Activated naive CD4-positive, alpha-beta T cell treated with anti-CD3 and anti-CD28 coated beads, Interleukin-2, amount 10 ng/mL, durations not matched to agents 7 days and 5 days (primary cell): ENCODE measurements at regions of chrX and their contacts with region 1.

Region 1: GRCh38 chrX:136028251-136028984 is 43.2 kb downstream of the SLC9A6 start:
- DNase-seq: no peak
- H3K4me3 Mint-ChIP-seq: no peak overlapping the region
- H3K27ac Mint-ChIP-seq: no peak overlapping the region
- H3K4me1 Mint-ChIP-seq: no peaks in the 10 kb centered on the region
- H3K27me3 Mint-ChIP-seq: no peaks in the 10 kb centered on the region

Region 2: GRCh38 chrX:135985141-135985972 is 43.1 kb before region 1 on chrX and contains the start of gene SLC9A6:
- CTCF ChIA-PET with region 1: no interaction called
- DNase-seq: peak; percentile 76
- H3K4me3 Mint-ChIP-seq: peak within 1 kb of the TSS; percentile 93
- H3K27ac Mint-ChIP-seq: peak within 1 kb of the TSS; percentile 88
- H3K4me1 Mint-ChIP-seq: peaks cover 59% of the 10 kb centered on the region
- H3K27me3 Mint-ChIP-seq: no peaks in the 10 kb centered on the region

Region 3: DNA sequence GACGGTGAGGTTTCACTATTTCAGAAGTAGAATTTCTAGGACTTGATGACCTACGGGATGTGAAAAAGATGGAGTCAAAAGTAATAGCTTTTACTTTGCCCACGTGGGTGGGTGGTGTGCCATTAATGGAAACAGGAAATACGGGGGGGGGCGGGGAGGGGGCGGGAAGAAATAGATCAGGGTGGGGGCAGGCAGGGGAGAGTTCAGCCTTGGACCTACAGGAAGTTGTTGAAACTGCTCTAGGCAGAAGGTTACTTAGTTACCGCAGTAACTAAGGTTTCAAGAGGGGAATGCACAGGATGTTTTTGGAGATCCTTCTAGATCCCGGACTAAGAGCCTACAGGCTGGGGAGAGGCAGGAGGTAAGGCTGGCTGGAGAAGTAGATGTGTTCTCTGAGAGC is 115.3 kb after region 1 on chrX:
- CTCF ChIA-PET with region 1: no interaction called
- DNase-seq: peak; percentile 22
- H3K4me3 Mint-ChIP-seq: peak overlapping the region; percentile 45
- H3K27ac Mint-ChIP-seq: peak overlapping the region; percentile 58
- H3K4me1 Mint-ChIP-seq: peaks cover 37% of the 10 kb centered on the region
- H3K27me3 Mint-ChIP-seq: peaks cover 22% of the 10 kb centered on the region

Region 4: DNA sequence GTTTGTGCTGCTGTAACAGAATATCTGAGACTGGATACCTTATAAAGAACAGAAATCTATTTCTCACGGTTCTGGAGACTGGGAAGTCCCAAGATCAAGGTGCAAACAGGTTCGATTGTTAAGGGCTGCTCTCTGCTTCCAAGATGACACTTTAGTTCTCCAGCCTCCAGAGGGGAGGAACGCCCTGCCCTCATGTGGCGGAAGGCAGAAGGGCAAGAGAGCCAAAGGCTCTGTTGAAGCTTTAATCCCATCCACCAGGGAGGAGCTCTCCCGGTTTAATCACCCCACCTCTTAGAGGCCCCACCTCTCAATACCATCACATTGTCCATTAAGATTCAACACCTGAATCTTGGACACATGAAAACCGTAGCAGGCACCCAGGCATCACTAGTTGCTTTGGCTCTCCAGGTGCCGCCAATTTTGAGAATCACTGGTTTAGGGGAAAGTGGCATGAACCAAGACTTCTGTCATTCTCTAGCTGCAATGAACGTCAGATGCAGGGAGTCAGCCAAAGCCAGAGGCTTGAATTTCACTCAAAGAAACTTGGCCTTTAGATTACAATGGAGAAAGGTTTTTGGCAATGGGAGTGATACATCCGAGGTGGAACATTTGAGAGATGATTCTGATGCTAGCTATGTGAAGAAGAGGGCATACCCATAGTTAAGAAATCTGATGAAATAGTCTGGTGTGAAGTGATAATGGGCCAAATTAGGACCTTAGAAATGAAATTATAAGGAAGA is 134.6 kb after region 1 on chrX:
- CTCF ChIA-PET with region 1: interaction called, 96 read pairs
- DNase-seq: peak; percentile 62
- H3K4me3 Mint-ChIP-seq: no peak overlapping the region
- H3K27ac Mint-ChIP-seq: no peak overlapping the region
- H3K4me1 Mint-ChIP-seq: peaks cover 8% of the 10 kb centered on the region
- H3K27me3 Mint-ChIP-seq: no peaks in the 10 kb centered on the region

Region 5: GRCh38 chrX:136196691-136197155 is 168.3 kb after region 1 on chrX:
- CTCF ChIA-PET with region 1: interaction called, 16 read pairs
- DNase-seq: no peak
- H3K4me3 Mint-ChIP-seq: no peak overlapping the region
- H3K27ac Mint-ChIP-seq: no peak overlapping the region
- H3K4me1 Mint-ChIP-seq: peaks cover 41% of the 10 kb centered on the region
- H3K27me3 Mint-ChIP-seq: no peaks in the 10 kb centered on the region

Region 6: DNA sequence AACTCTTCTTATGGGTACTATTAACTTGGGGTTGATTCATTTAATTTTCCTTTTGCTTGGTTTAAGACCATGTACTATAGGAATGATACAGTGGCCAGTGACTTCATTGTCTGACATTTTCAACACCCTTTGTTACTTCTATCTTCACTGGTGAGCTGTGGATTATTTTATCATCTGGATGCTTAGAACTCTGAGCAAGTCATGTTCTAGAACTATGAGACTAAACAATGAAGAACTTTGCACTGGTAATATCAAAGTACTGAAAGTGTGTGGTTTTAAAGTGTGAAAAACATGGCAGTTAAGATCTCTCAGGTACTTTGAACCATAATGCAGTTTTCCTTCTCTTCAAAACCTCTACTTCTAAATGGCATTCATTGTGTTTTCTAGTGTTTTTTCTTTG is 175.0 kb after region 1 on chrX:
- CTCF ChIA-PET with region 1: interaction called, 16 read pairs
- DNase-seq: no peak
- H3K4me3 Mint-ChIP-seq: no peak overlapping the region
- H3K27ac Mint-ChIP-seq: peak overlapping the region; percentile 77
- H3K4me1 Mint-ChIP-seq: peaks cover 35% of the 10 kb centered on the region
- H3K27me3 Mint-ChIP-seq: no peaks in the 10 kb centered on the region

Region 7: DNA sequence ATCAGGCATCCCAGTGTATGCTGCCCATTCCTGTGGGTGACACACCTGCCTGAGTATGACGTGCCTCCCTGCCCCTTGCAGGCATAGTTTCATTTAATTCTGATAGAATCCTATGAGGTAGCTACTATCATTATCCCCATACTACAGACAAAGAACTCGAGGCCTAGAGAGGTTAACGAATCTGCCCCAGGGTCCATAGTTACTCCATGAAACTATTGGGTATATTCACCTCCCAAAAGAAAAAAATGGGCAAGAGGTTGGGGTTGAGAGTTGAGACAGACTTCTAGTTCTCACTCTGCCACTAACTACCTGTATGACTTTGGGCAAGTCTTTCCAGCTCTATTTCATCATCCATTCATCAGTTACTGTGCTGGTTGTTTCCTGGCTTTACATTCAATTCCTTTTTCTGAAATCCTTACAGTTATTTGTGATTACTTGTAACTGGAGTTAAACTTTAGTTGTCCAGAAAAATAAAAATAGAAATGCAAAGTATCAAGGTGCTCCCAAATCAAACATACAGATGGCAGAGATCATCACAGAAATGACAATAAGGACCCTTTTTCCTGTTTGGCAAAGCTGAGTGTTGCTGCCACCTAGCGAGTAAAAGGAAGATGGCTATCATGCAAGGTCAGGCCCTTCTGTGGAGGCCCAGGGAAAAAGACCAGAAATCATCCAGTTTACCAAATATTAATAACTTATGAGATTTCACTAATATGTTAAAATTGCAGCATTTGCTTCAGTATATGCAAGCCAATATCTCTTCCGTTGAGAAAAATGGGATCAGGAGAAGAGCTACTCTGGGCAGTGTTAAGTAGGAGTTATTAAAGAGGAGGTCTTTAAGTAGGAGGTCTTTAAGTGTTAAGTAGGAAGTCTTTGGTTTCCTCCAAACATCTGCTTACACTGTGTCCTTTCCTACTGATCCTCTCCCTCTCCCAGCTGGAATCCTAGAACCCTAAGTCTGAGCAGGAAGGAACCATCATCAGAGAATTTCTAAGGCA is 239.9 kb after region 1 on chrX:
- CTCF ChIA-PET with region 1: interaction called, 20 read pairs
- DNase-seq: peak; percentile 63
- H3K4me3 Mint-ChIP-seq: no peak overlapping the region
- H3K27ac Mint-ChIP-seq: no peak overlapping the region
- H3K4me1 Mint-ChIP-seq: peaks cover 2% of the 10 kb centered on the region
- H3K27me3 Mint-ChIP-seq: no peaks in the 10 kb centered on the region